ENCODE measurements at regions of chr1 and their contacts with region 1.

Region 1: DNA sequence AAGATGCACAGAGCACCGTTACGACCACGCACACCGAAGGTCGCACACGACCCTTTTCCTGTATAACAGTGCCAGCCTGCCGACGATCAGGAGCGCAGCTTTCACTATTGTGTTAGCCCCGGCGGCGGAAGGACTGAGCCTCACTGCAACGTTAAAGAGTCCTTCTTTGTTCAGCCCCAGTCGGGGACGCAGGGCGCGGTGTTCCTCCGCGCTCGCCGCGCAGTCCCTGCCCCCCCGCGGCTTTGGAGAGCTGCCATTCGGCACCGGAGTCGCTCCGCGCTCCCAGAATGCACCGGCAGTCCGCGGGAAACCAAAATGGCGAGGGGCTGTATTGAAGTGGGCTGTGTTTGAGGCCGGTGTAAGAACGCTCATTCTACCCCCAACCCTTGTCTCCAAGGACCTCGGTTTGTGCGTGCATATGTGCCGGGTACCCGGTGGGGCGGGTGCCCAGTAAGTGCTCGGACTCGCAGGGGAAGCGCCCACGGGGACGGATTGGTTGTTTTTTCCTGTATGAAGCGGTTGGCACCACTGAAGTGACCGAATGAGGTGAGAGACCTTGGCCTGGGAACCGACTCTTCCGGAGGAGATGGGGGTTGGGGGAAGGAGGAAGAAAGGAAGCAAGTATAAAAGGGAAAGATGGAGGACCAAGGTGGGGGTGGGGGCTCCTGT is at the start of gene MTF2:
- DNase-seq: peak; percentile 93
- H3K4me3 ChIP-seq: peak within 1 kb of the TSS; percentile 81 to 85
- H3K27ac ChIP-seq: peak within 1 kb of the TSS; percentile 84 to 89
- H3K4me1 ChIP-seq: no peaks in the 10 kb centered on the region
- H3K27me3 ChIP-seq: no peaks in the 10 kb centered on the region
- CTCF ChIP-seq: peak in 3 of 4 experiments; percentile 10 to 40 (median 30)
- POLR2A ChIP-seq: peak; percentile 84
- total RNA-seq, gene MTF2: 10.4 to 31.5 TPM

Region 2: DNA sequence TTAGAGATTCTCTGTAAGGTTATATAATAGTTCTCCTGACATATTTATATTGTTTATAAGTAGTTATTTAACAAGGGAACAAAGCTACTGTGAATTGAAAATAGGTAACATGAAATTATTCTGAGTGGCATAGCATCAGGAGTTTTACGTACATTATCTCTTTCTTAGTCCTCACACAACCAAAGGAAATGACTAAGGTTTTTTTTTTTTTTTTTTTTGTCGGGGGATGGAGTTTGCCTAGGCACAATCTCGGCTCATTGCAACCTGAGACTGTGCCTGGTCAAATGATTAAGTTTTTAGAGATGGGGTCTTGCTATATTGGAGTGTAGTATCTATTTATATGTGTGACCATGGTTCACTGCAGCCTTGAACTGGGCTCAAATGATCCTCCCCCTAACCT is 76.2 kb after region 1 on chr1:
- intact Hi-C with region 1: no loop called
- DNase-seq: no peak
- H3K4me3 ChIP-seq: no peak overlapping the region
- H3K27ac ChIP-seq: no peak overlapping the region
- H3K4me1 ChIP-seq: no peaks in the 10 kb centered on the region
- H3K27me3 ChIP-seq: no peaks in the 10 kb centered on the region
- CTCF ChIP-seq: no peak
- POLR2A ChIP-seq: no peak

Region 3: DNA sequence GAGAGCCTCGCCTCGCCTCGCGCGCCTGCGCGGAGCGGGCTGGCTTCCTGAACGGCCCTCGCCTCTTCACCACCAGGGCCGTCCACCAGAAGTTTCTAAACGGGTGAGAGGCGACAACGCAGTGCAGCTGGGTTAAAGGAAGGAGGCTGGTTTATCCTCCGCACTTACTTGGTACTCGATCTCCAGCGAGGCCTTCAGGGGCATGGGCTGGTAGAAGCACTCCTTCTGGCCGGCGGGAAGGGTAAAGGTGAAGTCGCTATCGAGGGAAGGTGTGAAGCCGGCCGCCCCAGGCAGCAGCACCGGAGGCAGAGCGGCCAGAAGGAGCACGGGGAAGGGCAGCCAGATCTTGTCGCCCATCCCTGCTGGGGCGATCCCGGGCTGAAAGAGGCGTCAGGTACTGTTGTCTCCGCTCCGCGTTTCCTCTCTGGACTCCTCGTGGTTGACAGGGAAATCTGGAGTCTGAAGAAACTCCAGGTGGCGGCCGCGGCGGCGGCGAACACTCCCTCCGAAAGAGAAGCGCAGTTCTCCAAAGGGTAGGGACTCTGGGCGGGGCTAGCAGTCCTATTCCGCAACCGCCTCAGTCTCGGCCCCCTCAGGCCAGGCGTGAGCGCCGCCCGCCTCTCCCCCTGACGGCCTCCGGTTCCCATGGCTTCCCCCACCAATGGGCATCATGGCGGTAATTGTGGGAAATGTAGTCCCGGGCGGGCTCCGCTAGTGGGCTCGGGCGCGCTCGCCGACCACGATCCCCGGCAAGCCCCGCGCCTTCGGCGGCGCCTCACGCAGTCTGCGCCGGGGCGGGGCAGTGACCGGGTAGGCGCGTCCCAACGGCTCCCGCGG is 101.0 kb after region 1 on chr1 and contains the start of gene TMED5:
- intact Hi-C with region 1: loop called (anchors 5 kb)
- DNase-seq: peak; percentile 98
- H3K4me3 ChIP-seq: peak within 1 kb of the TSS; percentile 89 to 97
- H3K27ac ChIP-seq: peak within 1 kb of the TSS; percentile 98 to 100
- H3K4me1 ChIP-seq: peaks cover 7% of the 10 kb centered on the region
- H3K27me3 ChIP-seq: no peaks in the 10 kb centered on the region
- CTCF ChIP-seq: peak in 3 of 4 experiments; percentile 10 to 59 (median 48)
- POLR2A ChIP-seq: peak; percentile 97
- total RNA-seq, gene TMED5: 59.0 to 59.8 TPM

Region 4: DNA sequence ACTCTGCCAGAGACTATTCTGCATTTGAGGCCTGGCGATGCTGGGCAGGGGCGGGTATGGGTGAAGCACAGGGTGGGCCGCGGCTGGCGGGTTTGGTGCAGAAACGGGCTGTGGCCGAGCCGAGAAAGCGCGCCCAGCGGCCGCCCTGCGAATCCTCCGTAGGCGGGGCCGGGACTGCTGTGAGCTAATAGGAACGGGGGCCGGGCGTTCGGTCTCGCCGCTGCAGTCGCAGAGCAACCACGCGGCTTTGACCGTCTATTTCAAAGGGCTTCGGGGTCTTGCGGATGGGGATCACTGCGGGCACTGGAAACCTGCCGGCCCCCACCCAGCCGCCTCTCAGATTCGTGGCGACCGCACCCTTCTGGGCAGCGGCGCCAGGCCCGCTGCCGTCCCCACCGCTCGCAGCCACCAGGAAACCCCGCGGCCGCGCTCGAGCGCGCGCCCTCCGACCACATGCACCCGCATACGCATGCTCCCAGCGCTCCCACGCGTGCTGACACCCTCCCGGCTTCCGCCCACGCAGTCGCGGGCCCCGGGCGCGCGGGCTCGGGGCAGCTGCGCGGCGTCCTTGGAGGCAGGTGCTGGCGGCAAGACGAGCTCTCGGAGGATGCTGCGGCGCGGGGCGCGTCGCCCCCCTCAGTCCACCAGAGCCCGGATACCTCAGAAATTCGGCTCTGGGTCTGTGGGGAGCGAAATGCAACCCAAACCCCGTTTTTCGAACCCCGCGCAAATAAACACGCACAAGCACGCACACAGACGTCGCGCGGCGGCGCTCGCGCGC is 767.3 kb after region 1 on chr1:
- intact Hi-C with region 1: loop called (anchors 10 kb)
- DNase-seq: peak; percentile 86
- H3K4me3 ChIP-seq: peak overlapping the region; percentile 60 to 77
- H3K27ac ChIP-seq: peak overlapping the region; percentile 92 to 97
- H3K4me1 ChIP-seq: no peaks in the 10 kb centered on the region
- H3K27me3 ChIP-seq: no peaks in the 10 kb centered on the region
- CTCF ChIP-seq: peak in 3 of 4 experiments; percentile 10 to 55 (median 52)
- POLR2A ChIP-seq: peak; percentile 39